ENCODE measurements at regions of chr1 and their contacts with region 1.

Region 1: GRCh38 chr1:100459358-100460114 is 78.4 kb upstream of the GPR88 start:
- DNase-seq: peak; percentile 63
- ATAC-seq: peak; percentile 88
- H3K4me3 ChIP-seq: no peak overlapping the region
- H3K27ac ChIP-seq: no peak overlapping the region
- H3K4me1 ChIP-seq: no peaks in the 10 kb centered on the region
- H3K27me3 ChIP-seq: no peaks in the 10 kb centered on the region
- CTCF ChIP-seq: peak; percentile 71 to 84 (median 81); a peak in 5 of 6 replicates
- POLR2A ChIP-seq: no peak
- RAD21 ChIP-seq: peak; percentile 92

Region 2: DNA sequence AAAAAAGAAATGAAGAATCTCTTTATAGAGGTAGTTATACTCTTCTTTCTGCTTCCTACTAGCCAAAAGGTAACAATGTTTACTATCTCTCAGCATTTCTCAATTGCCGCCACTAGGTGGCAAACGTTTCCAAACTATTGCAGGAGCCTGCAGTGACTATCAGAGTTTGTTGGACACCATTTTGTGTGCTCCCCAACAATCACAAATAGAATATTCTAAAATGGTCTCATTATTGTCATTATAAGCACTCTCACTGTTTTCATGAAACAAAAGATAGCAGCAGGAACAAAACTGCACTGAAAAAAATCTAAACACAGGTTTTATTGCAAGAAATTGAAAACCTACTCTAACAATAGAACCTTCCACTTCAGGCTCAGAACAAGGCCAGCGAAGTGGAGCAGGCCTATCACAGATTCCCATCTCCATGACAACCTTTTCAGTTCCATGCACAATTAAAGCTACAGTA is 1279.2 kb before region 1 on chr1:
- CTCF ChIA-PET with region 1: no interaction called
- POLR2A ChIA-PET with region 1: no interaction called
- RAD21 ChIA-PET with region 1: no interaction called
- intact Hi-C with region 1: loop called (anchors 10 kb)
- DNase-seq: peak; percentile 79
- ATAC-seq: peak; percentile 97
- H3K4me3 ChIP-seq: no peak overlapping the region
- H3K27ac ChIP-seq: peak overlapping the region; percentile 38; the same call in 1 of the 2 replicates
- H3K4me1 ChIP-seq: peaks cover 2 to 3% of the 10 kb centered on the region in 2 experiments; a peak in 3 of 4 replicates
- H3K27me3 ChIP-seq: no peaks in the 10 kb centered on the region
- CTCF ChIP-seq: peak; percentile 71 to 83 (median 82)
- POLR2A ChIP-seq: no peak
- RAD21 ChIP-seq: peak; percentile 90

Region 3: GRCh38 chr1:99808391-99809115 is 651.0 kb before region 1 on chr1:
- CTCF ChIA-PET with region 1: interaction called, 10 read pairs
- POLR2A ChIA-PET with region 1: no interaction called
- RAD21 ChIA-PET with region 1: no interaction called
- intact Hi-C with region 1: loop called (anchors 1 kb)
- DNase-seq: peak; percentile 85
- ATAC-seq: peak; percentile 92
- H3K4me3 ChIP-seq: peak overlapping the region in 1 of 2 experiments; percentile 23; a peak in 1 of 4 replicates
- H3K27ac ChIP-seq: no peak overlapping the region
- H3K4me1 ChIP-seq: peaks cover 0 to 11% of the 10 kb centered on the region in 2 experiments; a peak in 2 of 4 replicates
- H3K27me3 ChIP-seq: no peaks in the 10 kb centered on the region
- CTCF ChIP-seq: peak; percentile 21 to 75 (median 71); a peak in 5 of 6 replicates
- POLR2A ChIP-seq: no peak
- RAD21 ChIP-seq: peak; percentile 95

Region 4: DNA sequence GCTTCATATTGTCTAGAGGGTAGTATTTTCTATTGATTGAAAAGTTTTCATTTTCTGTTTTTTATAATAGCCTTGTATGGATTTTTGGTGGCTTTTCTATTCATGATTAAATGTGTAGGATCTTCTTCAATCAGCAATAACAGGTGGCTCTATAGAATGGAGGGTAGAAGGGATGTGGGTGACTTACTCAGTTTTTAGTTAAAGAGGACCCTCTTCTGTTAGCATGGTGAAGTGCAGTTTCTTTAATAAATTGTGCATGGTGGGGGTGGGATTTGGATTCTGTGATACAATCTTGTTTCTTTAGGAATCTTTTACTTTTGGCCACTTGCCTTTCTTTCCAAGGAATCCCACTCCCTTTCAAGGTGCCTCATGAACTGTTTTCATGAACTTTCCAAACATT is 425.1 kb before region 1 on chr1:
- CTCF ChIA-PET with region 1: no interaction called
- POLR2A ChIA-PET with region 1: no interaction called
- RAD21 ChIA-PET with region 1: no interaction called
- intact Hi-C with region 1: loop called (anchors 2 kb)
- DNase-seq: no peak
- ATAC-seq: no peak
- H3K4me3 ChIP-seq: no peak overlapping the region
- H3K27ac ChIP-seq: no peak overlapping the region
- H3K4me1 ChIP-seq: peaks cover 0 to 12% of the 10 kb centered on the region in 2 experiments; a peak in 2 of 4 replicates
- H3K27me3 ChIP-seq: no peaks in the 10 kb centered on the region
- CTCF ChIP-seq: peak; percentile 37 to 66 (median 39); a peak in 4 of 6 replicates
- POLR2A ChIP-seq: no peak
- RAD21 ChIP-seq: peak; percentile 70

Region 5: GRCh38 chr1:100132566-100133477 is 326.7 kb before region 1 on chr1 and contains the starts of genes SASS6 and TRMT13:
- CTCF ChIA-PET with region 1: interaction called, 3 read pairs
- POLR2A ChIA-PET with region 1: no interaction called
- RAD21 ChIA-PET with region 1: no interaction called
- intact Hi-C with region 1: loop called (anchors 5 kb)
- DNase-seq: peak; percentile 97
- ATAC-seq: peak; percentile 92
- H3K4me3 ChIP-seq: peak within 1 kb of the TSS; percentile 76 to 78
- H3K27ac ChIP-seq: peak within 1 kb of the TSS; percentile 62
- H3K4me1 ChIP-seq: peaks cover 14 to 18% of the 10 kb centered on the region in 2 experiments
- H3K27me3 ChIP-seq: no peaks in the 10 kb centered on the region
- CTCF ChIP-seq: no peak
- POLR2A ChIP-seq: peak; percentile 67
- RAD21 ChIP-seq: no peak
- total RNA-seq, gene SASS6: 13.7 TPM
- total RNA-seq, gene TRMT13: 13.2 TPM

Region 6: GRCh38 chr1:100510451-100510850 is 50.9 kb after region 1 on chr1:
- CTCF ChIA-PET with region 1: no interaction called
- POLR2A ChIA-PET with region 1: no interaction called
- RAD21 ChIA-PET with region 1: no interaction called
- intact Hi-C with region 1: no loop called
- DNase-seq: no peak
- ATAC-seq: no peak
- H3K4me3 ChIP-seq: no peak overlapping the region
- H3K27ac ChIP-seq: no peak overlapping the region
- H3K4me1 ChIP-seq: no peaks in the 10 kb centered on the region
- H3K27me3 ChIP-seq: no peaks in the 10 kb centered on the region
- CTCF ChIP-seq: no peak
- POLR2A ChIP-seq: no peak
- RAD21 ChIP-seq: no peak

Region 7: GRCh38 chr1:101071470-101071891 is 611.9 kb after region 1 on chr1:
- CTCF ChIA-PET with region 1: no interaction called
- POLR2A ChIA-PET with region 1: no interaction called
- RAD21 ChIA-PET with region 1: no interaction called
- intact Hi-C with region 1: no loop called
- DNase-seq: no peak
- ATAC-seq: no peak
- H3K4me3 ChIP-seq: no peak overlapping the region
- H3K27ac ChIP-seq: no peak overlapping the region
- H3K4me1 ChIP-seq: peaks cover 0 to 7% of the 10 kb centered on the region in 2 experiments; a peak in 1 of 4 replicates
- H3K27me3 ChIP-seq: no peaks in the 10 kb centered on the region
- CTCF ChIP-seq: no peak
- POLR2A ChIP-seq: no peak
- RAD21 ChIP-seq: no peak

Region 8: GRCh38 chr1:101288491-101288944 is 829.0 kb after region 1 on chr1:
- CTCF ChIA-PET with region 1: no interaction called
- POLR2A ChIA-PET with region 1: no interaction called
- RAD21 ChIA-PET with region 1: no interaction called
- intact Hi-C with region 1: loop called (anchors 5 kb)
- DNase-seq: peak; percentile 72
- ATAC-seq: peak; percentile 94
- H3K4me3 ChIP-seq: peak overlapping the region in 1 of 2 experiments; percentile 30; a peak in 2 of 4 replicates
- H3K27ac ChIP-seq: no peak overlapping the region
- H3K4me1 ChIP-seq: peaks cover 0 to 6% of the 10 kb centered on the region in 2 experiments; a peak in 1 of 4 replicates
- H3K27me3 ChIP-seq: no peaks in the 10 kb centered on the region; the same call in 1 of the 2 replicates
- CTCF ChIP-seq: peak; percentile 74 to 98 (median 89)
- POLR2A ChIP-seq: no peak
- RAD21 ChIP-seq: peak; percentile 90

Measured in HCT116 (cell line).